ENCODE measurements at regions of chr4 and their contacts with region 1.

Region 1: DNA sequence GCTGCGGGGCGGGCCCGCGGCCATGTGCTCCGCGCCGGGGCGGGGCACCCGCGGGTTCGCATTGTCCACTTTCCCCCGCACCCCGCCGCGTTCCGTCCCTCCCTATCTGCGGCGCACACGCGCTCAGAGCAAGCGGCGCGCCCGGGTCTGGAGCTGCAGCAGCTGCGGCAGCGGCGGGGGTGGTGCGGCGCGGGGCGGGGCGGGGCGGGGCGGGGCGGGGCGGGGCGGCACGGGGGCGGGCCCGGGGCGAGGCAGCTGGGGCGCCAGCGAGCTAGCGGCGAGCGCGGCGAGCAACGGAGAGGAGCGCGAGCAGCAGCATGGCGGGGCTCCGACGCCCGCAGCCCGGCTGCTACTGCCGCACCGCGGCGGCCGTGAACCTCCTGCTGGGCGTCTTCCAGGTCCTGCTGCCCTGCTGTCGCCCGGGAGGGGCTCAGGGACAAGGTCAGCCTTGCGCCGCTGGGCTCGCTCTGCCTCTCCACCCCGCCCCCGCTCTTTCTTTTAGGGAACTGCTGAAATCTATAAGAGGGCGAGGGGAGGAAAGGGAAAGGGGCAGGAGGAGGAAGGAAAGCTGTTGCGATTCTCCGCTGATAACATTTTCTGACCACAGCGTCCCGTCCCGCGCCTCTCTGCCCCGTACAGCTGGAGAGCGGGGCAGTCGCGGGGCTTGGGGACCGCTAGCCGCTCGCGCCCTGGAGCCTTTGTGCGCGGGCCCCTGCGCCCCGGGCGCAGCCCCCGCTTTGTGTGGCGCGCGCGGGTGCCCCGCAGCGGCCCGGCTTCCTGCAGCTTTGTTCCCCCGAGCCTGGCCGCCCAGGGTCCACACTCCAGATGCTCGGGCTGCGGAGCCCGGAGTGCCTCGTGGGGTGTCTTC is at the start of gene TMEM131L:
- DNase-seq: peak; percentile 67
- ATAC-seq: peak; percentile 47
- H3K4me3 Mint-ChIP-seq: peak within 1 kb of the TSS; percentile 97
- H3K27ac Mint-ChIP-seq: peak within 1 kb of the TSS; percentile 98
- H3K4me1 Mint-ChIP-seq: peaks cover 55% of the 10 kb centered on the region
- H3K27me3 Mint-ChIP-seq: no peaks in the 10 kb centered on the region
- CTCF ChIP-seq: no peak
- total RNA-seq, gene TMEM131L: 170 and 193 TPM in 2 replicates

Region 2: GRCh38 chr4:152943672-152944071 is 522.6 kb before region 1 on chr4:
- CTCF ChIA-PET with region 1: no interaction called
- POLR2A ChIA-PET with region 1: no interaction called
- intact Hi-C with region 1: no loop called
- DNase-seq: no peak
- ATAC-seq: no peak
- H3K4me3 Mint-ChIP-seq: no peak overlapping the region
- H3K27ac Mint-ChIP-seq: no peak overlapping the region
- H3K4me1 Mint-ChIP-seq: peaks cover 4% of the 10 kb centered on the region
- H3K27me3 Mint-ChIP-seq: peaks cover 34% of the 10 kb centered on the region
- CTCF ChIP-seq: no peak

Region 3: DNA sequence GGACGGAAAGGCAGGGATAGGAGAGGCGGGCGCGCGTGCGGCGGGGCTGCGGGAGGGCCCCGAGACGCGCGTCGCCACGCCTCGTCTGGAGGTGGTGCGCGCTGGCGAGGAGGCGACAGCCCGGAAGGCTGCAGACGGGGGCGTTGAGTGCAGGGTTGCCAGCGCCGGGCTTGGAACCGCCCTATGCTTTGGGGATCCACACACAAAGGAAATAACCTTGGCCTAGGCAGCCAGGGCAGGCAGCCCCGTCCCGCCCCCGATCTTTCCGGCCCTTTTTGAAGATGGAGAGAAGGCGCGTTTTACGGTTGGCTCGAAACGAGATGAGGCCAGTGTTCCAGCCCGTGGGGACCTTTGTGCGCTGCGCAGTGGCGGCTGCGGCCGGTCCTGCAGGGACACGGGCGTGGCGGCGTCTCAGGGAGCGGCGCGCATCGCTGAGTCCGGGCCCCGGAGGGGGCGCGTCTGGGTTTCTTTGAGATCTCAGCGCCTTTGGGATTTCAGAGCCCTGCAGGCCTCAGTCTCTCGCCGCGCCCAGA is 312.9 kb before region 1 on chr4:
- CTCF ChIA-PET with region 1: no interaction called
- POLR2A ChIA-PET with region 1: no interaction called
- intact Hi-C with region 1: loop called (anchors 2 kb)
- DNase-seq: peak; percentile 63
- ATAC-seq: peak; percentile 76
- H3K4me3 Mint-ChIP-seq: peak overlapping the region; percentile 87
- H3K27ac Mint-ChIP-seq: peak overlapping the region; percentile 85
- H3K4me1 Mint-ChIP-seq: peaks cover 35% of the 10 kb centered on the region
- H3K27me3 Mint-ChIP-seq: peaks cover 30% of the 10 kb centered on the region
- CTCF ChIP-seq: no peak

Region 4: DNA sequence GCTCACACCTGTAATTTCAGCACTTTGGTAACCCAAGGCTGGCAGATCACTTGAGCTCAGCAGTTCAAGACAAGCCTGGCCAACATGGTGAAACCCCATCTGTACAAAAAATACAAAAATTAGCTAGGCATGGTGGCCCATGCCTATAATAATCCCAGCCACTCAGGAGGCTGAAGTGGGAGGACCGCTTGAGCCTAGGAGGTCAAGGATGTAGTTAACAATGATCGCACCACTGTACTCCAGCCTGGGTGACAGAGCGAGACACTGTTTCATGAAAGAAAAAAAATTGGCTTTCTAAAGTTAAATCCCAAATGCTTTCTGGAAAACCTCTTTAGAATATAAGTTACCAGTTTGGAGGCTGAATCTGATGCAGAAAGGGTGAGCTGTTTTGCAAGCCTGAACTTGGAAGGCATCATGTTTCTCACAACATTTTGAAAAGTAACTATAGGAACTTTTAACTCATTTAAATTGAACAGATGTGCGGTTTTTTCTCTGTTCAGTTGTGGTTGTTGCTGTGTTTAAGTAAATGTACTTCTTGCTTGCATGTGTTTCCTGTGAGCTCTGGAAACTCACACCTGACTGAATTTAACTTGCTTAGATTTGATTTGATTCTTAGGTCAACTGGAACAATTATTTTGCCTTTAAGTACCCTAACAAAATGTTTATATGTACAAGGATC is 40.0 kb before region 1 on chr4:
- CTCF ChIA-PET with region 1: interaction called, 3 read pairs
- POLR2A ChIA-PET with region 1: interaction called, 79 read pairs
- intact Hi-C with region 1: no loop called
- DNase-seq: no peak
- ATAC-seq: peak; percentile 75
- H3K4me3 Mint-ChIP-seq: no peak overlapping the region
- H3K27ac Mint-ChIP-seq: peak overlapping the region; percentile 71
- H3K4me1 Mint-ChIP-seq: peaks cover 49% of the 10 kb centered on the region
- H3K27me3 Mint-ChIP-seq: no peaks in the 10 kb centered on the region
- CTCF ChIP-seq: no peak

Region 5: DNA sequence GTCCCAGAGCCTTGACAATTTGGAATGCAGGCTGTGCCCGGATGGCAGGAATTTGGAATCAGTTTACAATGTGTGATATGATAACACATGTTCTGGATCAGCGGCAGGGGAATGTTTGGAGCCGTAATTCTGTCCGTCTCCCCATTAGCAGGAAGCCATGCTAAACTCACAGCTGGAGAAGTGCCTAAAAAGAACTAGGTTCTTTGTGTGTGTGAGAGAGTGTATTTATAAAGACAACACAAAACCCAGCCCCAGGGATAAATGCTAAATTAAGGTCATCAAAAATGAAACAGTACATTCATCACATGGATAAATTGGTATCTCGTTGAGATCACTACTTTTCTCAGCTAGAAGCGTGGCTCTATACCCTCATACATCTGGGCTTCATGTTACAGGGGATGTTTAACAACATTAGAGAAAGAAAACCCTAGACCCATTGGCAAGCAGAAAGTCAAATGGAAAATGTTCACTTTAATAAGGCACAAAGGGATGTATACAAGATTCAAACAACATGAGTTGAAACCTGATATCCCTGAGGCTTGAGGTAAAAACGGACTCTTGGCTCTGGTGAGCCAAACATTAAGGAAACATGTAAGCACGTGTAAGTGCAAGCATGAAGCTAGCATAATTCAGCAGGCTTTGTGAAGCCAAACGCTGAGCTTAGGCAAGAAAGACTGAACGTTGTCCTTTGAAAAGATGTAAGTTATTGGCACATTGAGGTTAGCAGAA is 18.1 kb before region 1 on chr4:
- CTCF ChIA-PET with region 1: no interaction called
- POLR2A ChIA-PET with region 1: interaction called, 31 read pairs
- intact Hi-C with region 1: loop called (anchors 1 kb)
- DNase-seq: no peak
- ATAC-seq: no peak
- H3K4me3 Mint-ChIP-seq: no peak overlapping the region
- H3K27ac Mint-ChIP-seq: peak overlapping the region; percentile 30
- H3K4me1 Mint-ChIP-seq: peaks cover 31% of the 10 kb centered on the region
- H3K27me3 Mint-ChIP-seq: no peaks in the 10 kb centered on the region
- CTCF ChIP-seq: no peak

Region 6: DNA sequence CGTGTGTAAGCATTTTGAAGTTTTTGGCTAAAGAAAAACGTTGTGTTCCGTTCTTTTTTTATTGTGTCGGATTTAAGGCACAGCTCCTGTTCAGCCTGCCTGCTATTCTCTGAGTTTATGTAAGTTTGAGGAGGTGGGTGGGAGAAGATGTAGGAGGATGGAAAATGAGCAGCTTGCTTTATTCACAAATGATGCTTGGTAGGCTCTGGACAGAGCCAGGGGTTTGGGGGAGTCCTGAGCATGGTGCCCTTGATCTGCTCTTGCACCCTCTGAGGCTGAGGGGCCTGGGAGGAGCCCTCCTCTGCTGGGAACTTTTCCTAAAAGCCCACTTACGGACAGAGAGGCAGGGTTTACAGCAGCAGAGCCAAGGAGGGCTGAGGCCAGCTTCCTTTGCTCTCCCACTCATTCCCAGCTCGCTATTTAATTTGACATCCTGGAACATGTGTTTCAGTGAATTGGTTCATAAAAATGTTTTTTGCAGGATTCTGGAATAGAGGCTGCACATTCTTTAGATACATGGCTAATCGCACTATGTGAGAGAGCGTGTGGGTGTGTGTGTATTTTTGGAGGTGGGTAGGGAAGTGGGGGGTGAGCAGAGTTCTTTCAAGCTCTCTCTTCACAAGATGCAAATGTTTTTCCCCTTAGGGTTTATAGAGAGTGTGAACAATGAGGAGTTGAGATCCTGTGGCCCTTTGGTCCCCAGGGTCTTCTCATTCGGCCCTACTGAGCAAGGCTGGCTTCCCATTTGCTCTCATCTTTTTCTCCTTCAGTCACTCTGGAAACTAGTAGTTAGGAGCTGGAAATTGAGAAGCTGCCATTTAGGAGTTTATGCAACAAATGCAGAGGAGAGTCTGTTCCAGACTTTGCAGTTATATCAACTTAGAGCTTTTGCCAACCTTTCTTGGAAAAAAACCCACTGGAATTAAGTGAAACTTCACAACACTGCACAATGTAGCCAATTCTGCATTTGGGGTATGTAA is 32.0 kb after region 1 on chr4:
- CTCF ChIA-PET with region 1: interaction called, 4 read pairs
- POLR2A ChIA-PET with region 1: interaction called, 52 read pairs
- intact Hi-C with region 1: no loop called
- DNase-seq: no peak
- ATAC-seq: peak; percentile 79
- H3K4me3 Mint-ChIP-seq: peak overlapping the region; percentile 73
- H3K27ac Mint-ChIP-seq: peak overlapping the region; percentile 80
- H3K4me1 Mint-ChIP-seq: peaks cover 94% of the 10 kb centered on the region
- H3K27me3 Mint-ChIP-seq: no peaks in the 10 kb centered on the region
- CTCF ChIP-seq: no peak

Region 7: GRCh38 chr4:153573881-153574802 is 107.8 kb after region 1 on chr4:
- CTCF ChIA-PET with region 1: interaction called, 24 read pairs
- POLR2A ChIA-PET with region 1: interaction called, 40 read pairs
- intact Hi-C with region 1: loop called (anchors 1 kb)
- DNase-seq: no peak
- ATAC-seq: peak; percentile 78
- H3K4me3 Mint-ChIP-seq: peak overlapping the region; percentile 32
- H3K27ac Mint-ChIP-seq: peak overlapping the region; percentile 82
- H3K4me1 Mint-ChIP-seq: peaks cover 77% of the 10 kb centered on the region
- H3K27me3 Mint-ChIP-seq: no peaks in the 10 kb centered on the region
- CTCF ChIP-seq: no peak